GM10248 (cell line): ENCODE measurements at regions of chr17 and their contacts with region 1.

Region 1: GRCh38 chr17:4980644-4981216 is 6.7 kb downstream of the CAMTA2 start:
- DNase-seq: peak; percentile 69
- CTCF ChIP-seq: peak; percentile 36

Region 2: GRCh38 chr17:4948931-4949320 is 31.8 kb before region 1 on chr17:
- CTCF ChIA-PET with region 1: interaction called, 12 read pairs
- POLR2A ChIA-PET with region 1: no interaction called
- DNase-seq: peak; percentile 86
- CTCF ChIP-seq: no peak